Activated naive CD4-positive, alpha-beta T cell treated with anti-CD3 and anti-CD28 coated beads, Interleukin-2, amount 10 ng/mL, durations not matched to agents 7 days and 5 days (primary cell): ENCODE measurements at regions of chrX and their contacts with region 1.

Region 1: GRCh38 chrX:153947009-153947769 is 2.7 kb upstream of the RENBP start:
- DNase-seq: peak; percentile 83
- H3K4me3 Mint-ChIP-seq: no peak overlapping the region
- H3K27ac Mint-ChIP-seq: peak overlapping the region; percentile 77
- H3K4me1 Mint-ChIP-seq: peaks cover 45% of the 10 kb centered on the region
- H3K27me3 Mint-ChIP-seq: no peaks in the 10 kb centered on the region

Region 2: DNA sequence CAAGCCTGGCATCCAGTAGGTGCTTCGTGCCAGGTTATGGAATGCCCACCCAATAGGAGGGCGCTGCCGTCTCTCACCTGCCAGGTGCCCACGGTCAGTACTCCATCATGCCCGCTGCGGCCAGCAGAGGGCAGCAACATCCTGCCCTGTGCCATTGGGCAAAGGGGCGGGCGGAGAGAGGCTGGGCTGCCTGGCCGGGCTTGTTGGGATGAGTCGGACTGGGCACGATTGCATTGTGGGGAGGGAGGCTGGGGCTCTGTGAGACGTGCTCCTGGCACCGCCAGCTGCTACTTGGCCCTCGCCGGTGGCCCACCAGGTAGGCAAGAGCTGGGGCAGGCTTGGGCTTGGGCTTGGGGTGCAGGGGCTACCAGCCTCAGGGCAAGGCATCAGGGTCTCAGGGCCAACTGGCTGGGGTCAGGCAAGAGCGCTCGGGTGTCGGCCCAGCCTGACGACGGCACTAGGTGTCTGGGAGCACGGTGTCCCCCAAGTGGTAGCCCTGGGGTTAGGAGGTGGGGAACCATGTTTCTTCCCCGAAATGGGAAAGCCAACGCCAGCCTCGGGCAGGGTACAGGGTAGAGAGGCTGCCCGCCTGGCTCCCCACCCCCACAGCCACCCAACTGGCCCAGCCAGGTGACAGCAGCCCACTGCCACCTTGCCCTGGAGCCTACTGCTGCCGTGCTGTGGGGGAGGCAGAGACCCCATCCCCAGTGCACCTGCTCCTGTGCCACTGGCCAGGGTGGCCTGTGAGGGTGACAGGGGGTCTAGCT is 183.0 kb before region 1 on chrX and contains the start of gene PLXNB3:
- CTCF ChIA-PET with region 1: interaction called, 27 read pairs
- DNase-seq: peak; percentile 80
- H3K4me3 Mint-ChIP-seq: no peak within 1 kb of the TSS
- H3K27ac Mint-ChIP-seq: no peak within 1 kb of the TSS
- H3K4me1 Mint-ChIP-seq: peaks cover 9% of the 10 kb centered on the region
- H3K27me3 Mint-ChIP-seq: peaks cover 14% of the 10 kb centered on the region

Region 3: DNA sequence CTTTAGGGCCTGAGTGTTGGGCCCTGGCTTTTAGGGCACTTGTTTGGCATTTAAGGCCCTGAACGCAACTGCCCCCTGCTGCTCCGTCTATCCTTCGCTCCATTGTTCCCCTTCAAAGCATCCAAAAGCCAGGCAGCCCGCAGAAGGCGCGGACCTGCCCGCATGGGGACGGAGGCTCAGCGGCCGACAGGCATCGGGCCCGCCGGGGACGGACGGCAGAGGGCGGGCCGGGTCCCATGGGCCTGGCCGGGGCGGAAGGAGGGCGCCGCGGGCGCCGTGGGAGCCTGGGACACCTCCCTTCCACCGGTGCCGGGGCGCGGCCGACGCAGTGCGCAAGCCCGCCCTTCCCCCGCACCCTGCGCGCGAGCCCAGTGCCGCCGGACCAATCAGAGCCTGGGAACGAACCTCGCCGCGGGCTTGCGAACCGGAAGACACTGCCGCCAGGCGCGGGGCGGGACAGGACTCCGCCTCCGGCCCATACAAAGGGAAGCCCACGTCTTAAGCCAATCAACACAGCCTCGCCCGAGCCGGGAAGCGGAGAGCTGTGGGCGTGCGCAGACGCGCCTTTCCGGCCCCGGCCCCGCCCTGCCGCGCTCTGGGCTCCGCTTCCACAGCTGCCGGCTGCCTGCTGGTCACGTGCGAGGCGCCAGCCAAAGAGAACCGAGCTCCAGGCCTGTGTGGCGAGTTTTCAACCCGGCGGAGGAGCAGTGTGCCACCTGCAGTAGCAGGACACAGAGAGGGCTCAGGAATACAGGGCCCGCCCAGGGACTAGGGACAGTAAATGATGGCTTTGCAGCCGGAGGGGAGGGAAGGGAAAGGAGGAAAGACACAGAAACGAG is 19.0 kb before region 1 on chrX:
- CTCF ChIA-PET with region 1: interaction called, 241 read pairs
- DNase-seq: peak; percentile 94
- H3K4me3 Mint-ChIP-seq: peak overlapping the region; percentile 94
- H3K27ac Mint-ChIP-seq: peak overlapping the region; percentile 99
- H3K4me1 Mint-ChIP-seq: peaks cover 35% of the 10 kb centered on the region
- H3K27me3 Mint-ChIP-seq: no peaks in the 10 kb centered on the region

Region 4: GRCh38 chrX:153968754-153969124 is 21.6 kb after region 1 on chrX:
- CTCF ChIA-PET with region 1: interaction called, 26 read pairs
- DNase-seq: peak; percentile 69
- H3K4me3 Mint-ChIP-seq: peak overlapping the region; percentile 100
- H3K27ac Mint-ChIP-seq: peak overlapping the region; percentile 100
- H3K4me1 Mint-ChIP-seq: peaks cover 38% of the 10 kb centered on the region
- H3K27me3 Mint-ChIP-seq: no peaks in the 10 kb centered on the region

Region 5: GRCh38 chrX:153981771-153982533 is 34.8 kb after region 1 on chrX:
- CTCF ChIA-PET with region 1: no interaction called
- DNase-seq: peak; percentile 80
- H3K4me3 Mint-ChIP-seq: peak overlapping the region; percentile 49
- H3K27ac Mint-ChIP-seq: peak overlapping the region; percentile 99
- H3K4me1 Mint-ChIP-seq: peaks cover 61% of the 10 kb centered on the region
- H3K27me3 Mint-ChIP-seq: no peaks in the 10 kb centered on the region